ENCODE measurements at regions of chr21 and their contacts with region 1.

Region 1: DNA sequence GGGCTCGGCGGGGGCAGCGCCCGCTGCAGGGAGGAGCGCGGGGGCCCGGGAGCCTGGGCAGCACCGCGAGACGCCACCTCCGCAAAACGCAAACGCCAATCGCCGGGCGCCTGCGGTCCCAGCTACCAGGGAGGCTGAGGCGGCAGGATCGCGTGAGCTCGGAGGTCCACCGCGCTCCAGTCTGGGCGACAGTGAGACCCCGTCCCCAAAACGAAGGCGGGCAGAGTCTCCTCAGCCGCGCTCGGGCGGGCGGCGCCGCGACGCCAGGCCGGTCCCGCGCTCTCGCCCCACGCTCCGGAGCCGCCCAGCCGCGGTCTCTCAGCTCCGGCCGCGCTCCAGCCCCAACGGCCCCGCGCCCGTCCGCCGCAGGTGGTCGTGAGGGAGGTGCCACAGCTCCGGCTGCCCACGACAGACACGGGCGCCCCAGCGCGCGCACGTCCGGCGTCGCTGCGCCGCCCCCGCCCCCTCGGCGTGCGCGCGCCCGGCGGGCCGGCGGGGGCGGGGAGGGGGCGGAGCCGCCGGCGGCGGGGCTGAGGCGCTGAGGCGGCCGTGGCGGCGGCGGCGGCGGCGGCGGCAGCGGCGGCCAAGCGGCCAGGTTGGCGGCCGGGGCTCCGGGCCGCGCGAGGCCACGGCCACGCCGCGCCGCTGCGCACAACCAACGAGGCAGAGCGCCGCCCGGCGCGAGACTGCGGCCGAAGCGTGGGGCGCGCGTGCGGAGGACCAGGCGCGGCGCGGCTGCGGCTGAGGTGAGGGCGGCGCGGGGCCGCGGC is at the start of gene ADARB1:
- DNase-seq: peak; percentile 76
- H3K4me3 ChIP-seq: peak within 1 kb of the TSS; percentile 92 to 97 (median 92)
- H3K27ac ChIP-seq: peak within 1 kb of the TSS; percentile 87 to 97 (median 92)
- H3K4me1 ChIP-seq: peaks cover 0 to 46% (median 26%) of the 10 kb centered on the region in 4 donors
- H3K27me3 ChIP-seq: no peaks in the 10 kb centered on the region
- CTCF ChIP-seq: no peak
- EP300 ChIP-seq: no peak
- POLR2A ChIP-seq: no peak
- total RNA-seq, gene ADARB1: 41.3 to 102 (median 71.0) TPM

Region 2: DNA sequence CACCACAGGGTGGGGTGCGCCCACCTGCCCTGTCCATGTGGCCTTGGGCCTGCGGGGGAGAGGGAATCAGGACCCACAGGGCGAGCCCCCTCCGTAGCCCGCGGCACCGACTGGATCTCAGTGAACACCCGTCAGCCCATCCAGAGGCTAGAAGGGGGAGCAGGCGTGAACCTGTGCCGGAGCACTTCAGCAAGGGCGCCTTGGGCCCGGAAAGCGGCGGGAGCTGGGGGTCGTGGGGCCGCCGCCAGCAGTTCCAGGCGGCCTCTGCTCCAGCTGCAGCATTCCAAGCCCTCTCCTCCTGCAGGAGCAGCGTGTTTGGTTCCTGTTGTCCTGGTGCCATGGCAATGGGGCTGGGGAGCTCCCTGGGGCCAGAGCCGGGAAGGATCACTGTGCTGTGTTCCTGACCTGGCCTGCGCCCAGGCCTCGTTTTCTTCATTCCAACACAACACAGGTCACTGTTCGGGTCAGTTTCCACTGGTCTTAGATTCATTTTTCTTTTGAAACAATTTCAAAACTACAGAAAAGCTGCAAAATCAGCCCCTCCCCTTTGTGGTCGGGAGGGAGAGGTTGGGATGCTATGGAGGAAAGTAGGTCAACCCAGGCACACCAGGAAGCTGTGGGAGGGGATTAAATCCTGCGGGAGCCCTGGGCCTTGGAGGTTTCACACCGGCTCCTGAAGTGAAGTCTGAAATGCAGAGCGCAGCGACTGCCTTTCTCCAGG is 115.6 kb before region 1 on chr21:
- intact Hi-C with region 1: loop called (anchors 5 kb)
- DNase-seq: peak; percentile 92
- H3K4me3 ChIP-seq: peak overlapping the region in 3 of 4 donors; percentile 9 to 27 (median 26)
- H3K27ac ChIP-seq: peak overlapping the region; percentile 79 to 91 (median 86)
- H3K4me1 ChIP-seq: peaks cover 0 to 77% (median 65%) of the 10 kb centered on the region in 4 donors
- H3K27me3 ChIP-seq: no peaks in the 10 kb centered on the region
- CTCF ChIP-seq: no peak
- EP300 ChIP-seq: peak in 1 of 4 donors; percentile 35
- POLR2A ChIP-seq: no peak

Region 3: GRCh38 chr21:45000977-45001728 is 73.1 kb before region 1 on chr21:
- intact Hi-C with region 1: loop called (anchors 5 kb)
- DNase-seq: peak; percentile 94
- H3K4me3 ChIP-seq: peak overlapping the region in 2 of 4 donors; percentile 21 to 33
- H3K27ac ChIP-seq: peak overlapping the region; percentile 55 to 82 (median 66)
- H3K4me1 ChIP-seq: peaks cover 0 to 47% (median 38%) of the 10 kb centered on the region in 4 donors
- H3K27me3 ChIP-seq: no peaks in the 10 kb centered on the region
- CTCF ChIP-seq: no peak
- EP300 ChIP-seq: no peak
- POLR2A ChIP-seq: peak in 1 of 2 donors; percentile 5

Region 4: DNA sequence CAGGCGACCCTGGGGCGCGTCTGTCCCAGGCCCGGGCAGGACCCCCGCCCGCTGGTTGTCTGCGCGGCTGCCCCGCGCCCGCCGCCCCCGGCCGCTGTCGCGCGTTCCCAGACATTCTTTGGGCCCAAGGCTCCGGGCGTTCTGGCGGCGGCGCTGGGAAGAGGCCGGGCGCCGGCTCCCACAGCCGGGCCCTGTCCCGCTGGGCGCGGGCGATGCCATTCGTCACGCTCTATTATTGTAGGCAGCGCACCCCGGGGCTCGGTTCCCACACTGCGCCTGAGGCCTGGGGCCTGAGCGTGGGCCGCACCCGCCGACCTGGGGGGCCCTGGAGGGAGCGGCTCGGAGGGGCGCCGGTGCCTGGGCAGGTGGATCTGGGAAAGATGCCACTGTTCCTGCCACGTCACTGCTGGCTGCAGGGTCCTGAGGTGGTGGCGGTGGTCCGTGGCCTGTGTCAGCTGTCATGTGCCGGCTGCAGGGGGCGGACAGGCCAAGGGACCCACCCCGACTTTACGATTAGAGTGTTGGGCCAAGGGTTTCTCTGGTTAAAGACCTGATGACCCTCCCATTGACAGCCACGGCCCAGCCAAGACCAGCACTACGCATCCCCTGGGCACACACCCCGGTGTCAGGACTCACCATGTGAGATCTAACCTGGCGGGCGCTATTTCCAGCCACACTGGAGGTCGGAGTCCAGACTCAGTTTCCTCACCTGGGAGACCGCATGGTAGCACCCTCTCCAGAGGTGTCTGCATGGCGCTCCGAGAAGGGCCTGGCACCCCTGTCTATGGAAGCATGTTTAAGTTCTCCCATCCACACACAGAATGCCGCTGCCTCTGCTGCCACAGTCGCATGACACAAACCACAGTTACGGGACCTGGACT is 54.9 kb before region 1 on chr21:
- intact Hi-C with region 1: loop called (anchors 5 kb)
- DNase-seq: peak; percentile 67
- H3K4me3 ChIP-seq: peak overlapping the region; percentile 33 to 61 (median 55)
- H3K27ac ChIP-seq: peak overlapping the region; percentile 75 to 80 (median 79)
- H3K4me1 ChIP-seq: peaks cover 0 to 21% (median 14%) of the 10 kb centered on the region in 4 donors
- H3K27me3 ChIP-seq: no peaks in the 10 kb centered on the region
- CTCF ChIP-seq: no peak
- EP300 ChIP-seq: no peak
- POLR2A ChIP-seq: no peak